Activated CD4-positive, alpha-beta T cell treated with anti-CD3 and anti-CD28 coated beads, Interleukin-2, amount 10 ng/mL, durations not matched to agents 24 days and 14 days (primary cell): ENCODE measurements at regions of chr17 and their contacts with region 1.

Region 1: DNA sequence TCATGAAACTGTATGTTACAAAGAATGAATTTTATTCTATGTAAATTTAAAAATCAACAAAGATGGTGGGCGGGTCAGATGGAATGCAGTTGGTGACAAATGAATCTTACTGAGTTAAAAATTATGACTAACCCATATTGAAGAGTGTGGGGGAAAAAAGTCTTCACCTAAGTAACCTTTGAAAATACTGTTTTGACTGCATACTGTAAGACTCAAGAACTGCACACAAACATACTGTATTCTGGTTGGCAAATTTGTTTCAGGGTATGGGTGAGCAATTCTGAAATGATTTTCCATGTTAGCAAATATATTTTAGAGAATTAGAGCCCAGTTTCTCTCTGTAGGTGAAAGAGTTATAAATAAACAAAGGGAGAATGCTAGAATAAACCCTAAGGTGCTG is 153.7 kb upstream of the KCNJ18 start:
- DNase-seq: no peak
- H3K4me3 Mint-ChIP-seq: no peak overlapping the region
- H3K27ac Mint-ChIP-seq: no peak overlapping the region
- H3K4me1 Mint-ChIP-seq: peaks cover 14% of the 10 kb centered on the region
- H3K27me3 Mint-ChIP-seq: no peaks in the 10 kb centered on the region

Region 2: GRCh38 chr17:21551081-21551881 is 12.7 kb after region 1 on chr17:
- intact Hi-C with region 1: loop called (anchors 1 kb)
- DNase-seq: peak; percentile 92
- H3K4me3 Mint-ChIP-seq: peak overlapping the region; percentile 92
- H3K27ac Mint-ChIP-seq: peak overlapping the region; percentile 65
- H3K4me1 Mint-ChIP-seq: peaks cover 24% of the 10 kb centered on the region
- H3K27me3 Mint-ChIP-seq: peaks cover 22% of the 10 kb centered on the region